ENCODE measurements at regions of chr6 and their contacts with region 1.

Region 1: DNA sequence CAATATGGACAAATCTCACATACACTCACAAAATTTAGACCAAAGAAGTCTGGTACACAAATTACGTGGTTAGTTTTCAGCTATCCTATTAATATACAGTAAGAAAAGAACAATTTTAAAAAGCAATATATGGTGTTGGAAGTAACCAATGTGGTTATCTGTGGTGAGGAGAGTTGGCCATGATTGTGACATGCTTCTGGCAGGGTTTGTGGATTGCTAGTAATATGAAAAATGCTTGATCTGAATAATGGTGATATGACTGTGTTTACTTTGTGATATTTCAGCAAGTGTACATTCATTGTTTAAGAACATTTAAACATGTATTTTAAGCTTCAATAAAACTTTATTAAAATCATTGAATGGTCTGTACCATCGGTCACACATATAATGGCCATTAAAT is 99.1 kb downstream of the ADGB start:
- DNase-seq: no peak

Region 2: GRCh38 chr6:146901940-146902816 is 204.3 kb after region 1 on chr6:
- intact Hi-C with region 1: loop called in 1 of 2 experiments (anchors 5 kb)
- DNase-seq: no peak